ENCODE measurements at regions of chr14 and their contacts with region 1.

Region 1: DNA sequence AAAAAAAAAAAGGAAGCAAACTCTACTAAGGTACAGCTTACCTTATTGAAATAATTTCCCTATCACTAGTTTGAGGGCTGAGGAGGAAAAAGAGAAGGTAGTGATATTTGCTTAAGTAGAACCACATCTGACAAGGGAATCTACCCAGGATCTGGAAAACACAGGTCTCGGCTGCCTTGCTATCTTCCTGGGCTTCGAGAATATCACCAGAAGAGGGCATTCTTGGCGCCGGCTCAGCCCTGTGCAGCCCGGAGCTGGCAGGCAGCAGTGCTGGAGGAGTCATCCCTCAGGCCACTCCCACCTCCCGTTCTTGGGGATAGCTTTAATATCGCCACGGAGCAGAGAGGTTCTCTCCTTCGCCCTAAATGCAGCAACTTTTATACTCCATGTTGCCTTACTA is 1181.2 kb downstream of the VRK1 start:
- DNase-seq: peak; percentile 92
- H3K4me3 Mint-ChIP-seq: peak overlapping the region; percentile 89
- H3K27ac Mint-ChIP-seq: peak overlapping the region; percentile 97
- H3K4me1 Mint-ChIP-seq: peaks cover 49% of the 10 kb centered on the region
- H3K27me3 Mint-ChIP-seq: no peaks in the 10 kb centered on the region

Region 2: GRCh38 chr14:97299661-97300060 is 678.7 kb before region 1 on chr14:
- intact Hi-C with region 1: loop called (anchors 10 kb)
- DNase-seq: peak; percentile 73
- H3K4me3 Mint-ChIP-seq: no peak overlapping the region
- H3K27ac Mint-ChIP-seq: no peak overlapping the region
- H3K4me1 Mint-ChIP-seq: peaks cover 6% of the 10 kb centered on the region
- H3K27me3 Mint-ChIP-seq: peaks cover 17% of the 10 kb centered on the region

Region 3: GRCh38 chr14:97707603-97708002 is 270.7 kb before region 1 on chr14:
- intact Hi-C with region 1: loop called (anchors 10 kb)
- DNase-seq: peak; percentile 75
- H3K4me3 Mint-ChIP-seq: no peak overlapping the region
- H3K27ac Mint-ChIP-seq: peak overlapping the region; percentile 28
- H3K4me1 Mint-ChIP-seq: peaks cover 72% of the 10 kb centered on the region
- H3K27me3 Mint-ChIP-seq: no peaks in the 10 kb centered on the region

Region 4: DNA sequence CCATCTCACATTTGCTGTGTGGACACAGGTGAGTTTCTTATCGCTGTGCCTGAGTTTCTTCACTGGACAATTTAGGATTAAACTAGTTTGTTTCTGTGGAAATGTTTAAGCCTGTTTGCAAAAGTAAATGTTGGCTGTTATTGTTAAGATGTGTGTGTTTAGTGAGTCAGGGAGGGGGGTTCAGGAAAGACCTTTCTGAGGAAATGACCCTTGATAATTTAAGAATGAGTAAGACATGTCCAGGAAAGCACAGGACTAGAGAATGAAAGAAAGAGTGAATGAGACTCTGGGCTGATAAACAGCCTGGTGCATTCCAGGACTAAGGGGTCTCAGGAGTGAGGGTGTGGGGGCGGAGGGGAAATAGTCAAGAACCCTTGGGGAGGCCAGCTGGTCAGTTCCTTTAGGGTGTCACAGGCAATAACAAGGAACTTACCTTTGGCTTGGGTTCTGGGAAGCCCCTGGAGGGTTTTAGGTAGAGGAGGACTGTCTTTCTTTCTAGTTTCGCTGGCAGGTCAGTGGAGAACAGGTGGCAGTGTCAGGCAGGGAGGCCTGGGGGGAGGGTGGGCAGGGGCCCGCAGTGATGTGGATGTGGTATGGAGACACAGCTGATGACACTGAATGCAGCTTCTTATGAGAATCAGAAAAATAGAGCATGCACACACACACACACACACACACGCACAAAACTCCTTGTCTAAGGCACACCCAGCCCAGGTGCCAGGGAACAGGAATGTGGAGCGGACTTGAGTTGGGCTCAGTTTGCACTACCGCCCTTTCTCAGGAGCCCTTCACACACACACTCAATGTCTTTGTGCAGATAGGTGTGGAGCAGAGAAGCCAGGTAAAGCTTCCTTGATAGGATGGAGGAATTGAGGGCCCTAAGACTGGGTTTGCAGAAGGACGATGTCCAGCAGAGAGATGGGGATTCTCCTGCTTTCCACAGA is 175.6 kb before region 1 on chr14:
- intact Hi-C with region 1: no loop called
- DNase-seq: no peak
- H3K4me3 Mint-ChIP-seq: no peak overlapping the region
- H3K27ac Mint-ChIP-seq: no peak overlapping the region
- H3K4me1 Mint-ChIP-seq: peaks cover 3% of the 10 kb centered on the region
- H3K27me3 Mint-ChIP-seq: no peaks in the 10 kb centered on the region

Region 5: DNA sequence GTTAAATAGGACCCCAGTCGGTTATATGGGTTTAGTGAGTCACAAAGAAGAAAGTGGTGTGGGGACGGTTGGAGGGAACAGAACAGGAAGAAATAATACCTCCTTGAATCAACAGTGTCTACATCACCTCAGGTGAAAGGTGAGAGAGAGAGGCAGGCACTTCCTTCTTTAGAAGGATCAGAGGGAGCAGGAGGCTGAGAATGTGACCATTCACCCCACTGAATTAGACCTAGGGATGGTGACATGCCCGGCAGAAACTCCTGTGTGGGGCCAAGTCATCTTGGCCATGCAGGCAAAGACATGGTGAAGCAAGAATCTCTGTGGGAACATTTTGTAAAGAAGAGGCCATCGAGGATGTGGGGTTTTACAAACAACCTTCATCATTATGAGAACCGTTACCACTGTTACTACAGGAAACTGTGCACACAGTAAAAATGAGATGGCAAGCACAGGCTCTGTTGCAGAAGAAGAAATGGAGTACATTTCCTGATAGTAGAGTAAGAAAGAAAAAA is 15.7 kb after region 1 on chr14:
- intact Hi-C with region 1: loop called (anchors 1 kb)
- DNase-seq: peak; percentile 82
- H3K4me3 Mint-ChIP-seq: peak overlapping the region; percentile 37
- H3K27ac Mint-ChIP-seq: peak overlapping the region; percentile 84
- H3K4me1 Mint-ChIP-seq: peaks cover 34% of the 10 kb centered on the region
- H3K27me3 Mint-ChIP-seq: no peaks in the 10 kb centered on the region

Region 6: GRCh38 chr14:98227000-98227726 is 248.8 kb after region 1 on chr14:
- intact Hi-C with region 1: loop called (anchors 5 kb)
- DNase-seq: peak; percentile 82
- H3K4me3 Mint-ChIP-seq: peak overlapping the region; percentile 70
- H3K27ac Mint-ChIP-seq: peak overlapping the region; percentile 87
- H3K4me1 Mint-ChIP-seq: peaks cover 60% of the 10 kb centered on the region
- H3K27me3 Mint-ChIP-seq: no peaks in the 10 kb centered on the region

Region 7: GRCh38 chr14:99192028-99192621 is 1213.8 kb after region 1 on chr14:
- intact Hi-C with region 1: loop called (anchors 5 kb)
- DNase-seq: peak; percentile 80
- H3K4me3 Mint-ChIP-seq: peak overlapping the region; percentile 90
- H3K27ac Mint-ChIP-seq: peak overlapping the region; percentile 89
- H3K4me1 Mint-ChIP-seq: peaks cover 89% of the 10 kb centered on the region
- H3K27me3 Mint-ChIP-seq: no peaks in the 10 kb centered on the region

Region 8: DNA sequence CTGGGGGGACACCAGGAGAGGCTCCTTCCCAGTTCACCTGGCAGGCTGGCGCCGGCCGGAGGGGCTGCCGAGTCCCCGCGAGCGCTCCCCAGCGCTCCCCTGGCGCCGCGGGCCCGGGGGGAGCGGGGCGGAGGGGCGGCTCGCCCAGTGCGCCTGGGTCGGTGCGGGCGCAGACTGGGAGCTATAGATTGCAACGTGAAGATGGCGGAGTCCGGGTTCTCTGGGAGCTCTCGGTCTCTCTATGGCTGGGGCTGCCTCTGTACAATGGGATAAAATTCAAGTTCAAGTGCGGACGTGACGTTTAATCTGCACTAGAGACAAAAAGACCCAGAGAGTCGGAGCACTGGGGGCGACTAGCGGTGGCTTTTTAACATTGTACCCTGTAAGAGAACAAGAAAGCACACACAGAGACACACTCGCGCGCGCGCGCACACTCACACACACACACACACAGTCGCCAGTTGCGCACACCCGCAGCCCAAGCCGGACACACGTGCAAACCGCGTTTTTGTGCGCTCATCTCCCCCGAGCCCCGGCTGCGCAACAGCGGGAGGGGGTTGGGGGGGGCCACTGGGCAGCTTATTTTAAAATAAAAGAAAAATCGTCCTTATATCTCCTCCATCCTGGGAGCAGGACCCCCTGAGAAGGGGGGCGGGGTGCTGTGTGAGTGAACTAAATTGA is 1293.8 kb after region 1 on chr14 and contains the start of gene BCL11B:
- intact Hi-C with region 1: loop called (anchors 1 kb)
- DNase-seq: peak; percentile 96
- H3K4me3 Mint-ChIP-seq: peak within 1 kb of the TSS; percentile 91
- H3K27ac Mint-ChIP-seq: peak within 1 kb of the TSS; percentile 95
- H3K4me1 Mint-ChIP-seq: peaks cover 42% of the 10 kb centered on the region
- H3K27me3 Mint-ChIP-seq: peaks cover 13% of the 10 kb centered on the region
- total RNA-seq, gene BCL11B: 48.2 and 48.5 TPM in 2 replicates

Measured in activated CD4-positive, alpha-beta T cell treated with anti-CD3 and anti-CD28 coated beads, Interleukin-2, amount 10 ng/mL, durations not matched to agents 24 days and 14 days (primary cell).